Adrenal gland (tissue), 19 donors: ENCODE measurements at regions of chr3 and their contacts with region 1.

Region 1: DNA sequence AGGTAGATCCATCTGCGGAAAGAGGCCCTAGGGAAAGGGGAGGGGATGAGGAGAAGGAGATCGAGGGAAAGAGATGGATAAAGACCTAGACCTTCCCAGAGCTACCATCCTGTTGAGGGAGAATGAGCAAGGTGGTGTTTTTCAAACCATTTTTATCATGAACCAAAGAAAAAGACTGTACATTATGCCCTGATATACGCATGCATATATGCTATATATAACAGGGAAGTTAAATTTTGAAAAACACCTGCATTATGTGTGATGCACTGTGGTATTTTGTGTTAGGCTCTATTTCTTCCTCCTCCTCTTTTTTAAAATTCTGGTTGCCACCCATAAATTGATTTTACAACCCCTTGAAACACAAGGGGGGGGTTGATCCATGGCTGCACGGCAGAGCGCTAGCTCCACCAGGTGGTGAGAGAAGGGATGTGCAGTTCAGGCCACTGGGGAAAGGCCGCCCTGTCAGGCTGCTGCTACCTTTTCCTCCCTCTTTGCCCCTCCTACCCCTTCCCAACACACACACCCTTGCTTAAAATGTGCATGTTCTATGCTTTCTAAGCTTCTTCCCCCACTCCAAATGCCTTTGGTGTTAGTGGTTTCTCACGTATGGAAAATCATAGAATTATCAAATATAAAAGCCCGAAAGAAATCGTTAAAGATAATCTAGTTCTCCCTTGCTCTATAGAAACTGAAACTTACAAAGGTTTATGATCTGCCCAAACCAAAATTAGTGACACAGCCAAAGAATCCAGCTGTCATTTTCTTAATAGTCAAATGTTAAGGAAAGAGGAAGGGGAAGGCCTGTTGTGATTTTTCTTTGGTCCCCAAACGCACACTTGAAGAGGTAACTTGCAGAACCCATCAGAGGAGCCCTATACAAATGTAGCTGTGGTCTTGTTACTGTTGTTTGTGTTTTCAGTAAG is 262.0 kb upstream of the UMPS start:
- DNase-seq: peak; percentile 31 to 65 (median 42)
- H3K4me3 ChIP-seq: no peak overlapping the region
- H3K27ac ChIP-seq: no peak overlapping the region
- H3K4me1 ChIP-seq: no peaks in the 10 kb centered on the region
- H3K27me3 ChIP-seq: no peaks in the 10 kb centered on the region
- CTCF ChIP-seq: peak; percentile 87 to 97 (median 93)
- POLR2A ChIP-seq: no peak

Region 2: DNA sequence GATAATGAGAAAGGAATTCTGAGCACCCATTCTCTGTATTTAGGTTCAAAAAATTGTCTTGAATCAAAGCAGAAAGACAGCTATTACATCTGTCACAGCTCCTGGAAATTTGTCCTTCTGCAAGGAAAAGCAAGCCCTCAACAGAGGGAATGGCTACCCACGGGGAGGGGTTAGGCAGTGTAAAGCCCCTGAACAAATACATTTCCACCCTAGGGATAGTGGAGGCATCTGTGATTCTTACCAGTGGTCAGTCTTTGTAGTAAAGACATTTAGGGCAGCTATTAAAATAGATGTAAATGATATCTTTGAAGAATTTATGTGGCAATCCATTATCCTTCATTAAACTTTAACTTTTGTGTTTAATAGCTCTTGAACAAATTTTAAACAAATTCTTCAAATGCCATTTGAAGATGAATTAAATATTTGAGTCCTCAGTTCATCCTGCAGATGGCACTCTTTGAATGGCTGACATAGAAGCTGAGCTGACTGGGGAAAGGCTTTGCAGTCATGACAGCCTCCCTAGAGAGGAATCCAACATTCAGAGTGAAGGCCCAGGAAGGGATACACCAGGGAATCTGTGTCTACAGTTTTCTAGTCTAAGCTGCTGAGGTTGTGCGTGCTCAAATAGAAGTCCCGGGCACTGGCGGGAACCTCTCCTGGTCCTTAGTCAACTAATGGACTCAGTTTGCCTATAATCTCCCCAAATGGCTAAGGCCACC is 116.7 kb before region 1 on chr3:
- intact Hi-C with region 1: loop called (anchors 2 to 5 kb)
- DNase-seq: peak; percentile 38 to 63 (median 50)
- H3K4me3 ChIP-seq: no peak overlapping the region
- H3K27ac ChIP-seq: no peak overlapping the region
- H3K4me1 ChIP-seq: no peaks in the 10 kb centered on the region
- H3K27me3 ChIP-seq: no peaks in the 10 kb centered on the region
- CTCF ChIP-seq: peak; percentile 53 to 79 (median 68)
- POLR2A ChIP-seq: no peak